AG04449 (cell line): ENCODE measurements at regions of chr6 and their contacts with region 1.

Region 1: DNA sequence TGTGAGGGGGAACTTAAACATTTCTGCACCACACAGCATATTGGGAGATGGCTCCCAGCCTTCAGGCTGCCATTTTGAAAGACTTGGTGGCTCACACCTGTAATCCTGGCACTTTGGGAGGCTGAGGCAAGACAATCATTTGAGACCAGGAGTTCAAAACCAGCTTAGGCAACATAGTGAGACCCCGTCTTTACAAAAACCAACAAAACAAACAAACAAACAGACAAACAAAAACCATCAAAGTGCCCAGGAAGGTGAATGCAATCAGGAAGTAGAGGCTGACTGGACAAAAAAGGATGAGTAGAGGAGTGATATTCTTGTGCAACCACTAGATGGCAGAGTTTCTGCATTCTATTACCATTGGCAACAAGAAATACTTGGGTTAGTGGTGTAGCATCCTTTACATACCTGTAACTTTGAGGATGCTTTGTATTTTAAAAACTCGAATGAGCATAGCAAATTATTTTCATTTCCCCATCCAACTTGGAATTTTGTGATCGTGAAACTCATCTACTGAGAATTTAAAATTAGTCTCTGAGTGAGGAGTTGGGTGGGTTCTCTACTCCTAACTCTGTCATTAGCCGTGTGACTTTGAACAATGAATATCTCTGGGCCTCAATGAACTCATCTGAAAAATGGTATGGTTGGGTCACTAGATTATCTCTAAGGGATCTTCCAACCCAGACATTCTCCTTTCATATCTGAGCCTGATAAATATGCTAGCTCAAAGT is 84.4 kb downstream of the CRYBG1 start:
- DNase-seq: no peak
- H3K4me3 ChIP-seq: no peak overlapping the region
- CTCF ChIP-seq: peak; percentile 64

Region 2: DNA sequence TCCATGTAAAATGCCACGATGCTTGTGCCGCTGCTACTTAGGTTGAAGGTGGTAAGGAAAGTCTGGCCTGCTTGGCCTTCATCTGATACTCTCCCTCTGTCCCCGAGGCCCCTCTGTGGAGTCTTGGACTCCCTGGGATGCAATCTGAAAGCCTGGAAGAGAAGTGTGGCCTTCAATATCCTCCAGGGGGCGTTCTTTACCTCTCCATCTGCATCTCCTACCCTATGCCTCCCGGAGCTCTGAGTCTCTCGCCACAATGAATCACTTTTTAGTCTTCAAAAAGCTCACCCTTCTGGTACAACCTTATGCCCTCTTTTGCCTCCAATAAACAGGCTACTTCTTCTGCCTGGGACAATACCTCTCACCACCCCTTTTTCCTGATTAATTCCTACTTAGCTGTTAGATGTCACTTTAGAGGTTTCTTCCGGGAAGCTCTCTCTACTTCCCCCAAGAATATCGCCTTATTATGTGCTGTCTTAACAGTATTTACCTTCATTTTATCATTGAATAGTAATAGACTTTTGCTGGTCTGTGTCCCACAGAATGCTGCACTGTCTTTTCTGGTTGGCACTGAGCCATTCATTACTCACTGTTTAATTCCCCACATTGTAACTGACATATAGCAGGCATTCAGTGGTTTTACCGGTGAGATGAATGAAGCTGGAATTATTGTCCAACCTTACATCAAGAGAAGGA is 105.5 kb before region 1 on chr6:
- CTCF ChIA-PET with region 1: interaction called, 18 read pairs
- POLR2A ChIA-PET with region 1: no interaction called
- DNase-seq: peak; percentile 24
- H3K4me3 ChIP-seq: no peak overlapping the region
- CTCF ChIP-seq: peak; percentile 81

Region 3: GRCh38 chr6:106411643-106412200 is 33.2 kb before region 1 on chr6:
- CTCF ChIA-PET with region 1: no interaction called
- POLR2A ChIA-PET with region 1: no interaction called
- DNase-seq: no peak
- H3K4me3 ChIP-seq: no peak overlapping the region
- CTCF ChIP-seq: no peak

Region 4: GRCh38 chr6:106512048-106512967 is 67.4 kb after region 1 on chr6:
- CTCF ChIA-PET with region 1: interaction called, 10 read pairs
- POLR2A ChIA-PET with region 1: no interaction called
- DNase-seq: no peak
- H3K4me3 ChIP-seq: peak overlapping the region; percentile 76
- CTCF ChIP-seq: peak; percentile 35

Region 5: DNA sequence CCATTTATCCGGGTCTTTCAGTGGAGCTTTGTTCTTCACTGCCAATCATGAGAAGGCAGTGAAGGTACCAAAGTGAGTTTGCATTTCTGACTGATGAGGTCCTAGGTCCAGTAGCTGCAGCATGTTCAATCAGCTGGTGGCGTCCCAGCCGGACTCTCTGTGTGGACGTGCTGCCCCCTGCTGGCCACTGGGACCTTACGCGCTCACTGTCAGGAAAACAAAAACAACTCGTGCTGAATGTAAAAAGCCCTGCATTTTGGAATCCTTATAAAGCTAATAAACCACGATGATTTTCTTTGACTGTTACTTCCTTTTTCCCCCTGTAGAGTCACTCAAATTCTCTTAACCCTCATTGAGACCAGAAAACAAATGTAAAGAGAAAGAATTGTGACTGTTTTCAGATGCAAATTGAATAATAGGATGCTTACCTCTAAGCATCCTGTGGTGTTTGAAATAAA is 534.5 kb after region 1 on chr6:
- CTCF ChIA-PET with region 1: interaction called, 124 read pairs
- POLR2A ChIA-PET with region 1: no interaction called
- DNase-seq: peak; percentile 14
- H3K4me3 ChIP-seq: no peak overlapping the region
- CTCF ChIP-seq: peak; percentile 98